Activated naive CD4-positive, alpha-beta T cell treated with anti-CD3 and anti-CD28 coated beads for 36 hours (primary cell): ENCODE measurements at regions of chr3 and their contacts with region 1.

Region 1: GRCh38 chr3:66239513-66240123 is 18.8 kb downstream of the SLC25A26 start:
- DNase-seq: peak; percentile 64
- H3K4me3 Mint-ChIP-seq: peak overlapping the region; percentile 5
- H3K27ac Mint-ChIP-seq: peak overlapping the region; percentile 86
- H3K4me1 Mint-ChIP-seq: peaks cover 30% of the 10 kb centered on the region
- H3K27me3 Mint-ChIP-seq: no peaks in the 10 kb centered on the region

Region 2: GRCh38 chr3:66228707-66229106 is 10.9 kb before region 1 on chr3:
- CTCF ChIA-PET with region 1: interaction called, 4 read pairs
- intact Hi-C with region 1: loop called (anchors 1 kb)
- DNase-seq: no peak
- H3K4me3 Mint-ChIP-seq: no peak overlapping the region
- H3K27ac Mint-ChIP-seq: no peak overlapping the region
- H3K4me1 Mint-ChIP-seq: peaks cover 53% of the 10 kb centered on the region
- H3K27me3 Mint-ChIP-seq: no peaks in the 10 kb centered on the region